ENCODE measurements at regions of chr12 and their contacts with region 1.

Region 1: DNA sequence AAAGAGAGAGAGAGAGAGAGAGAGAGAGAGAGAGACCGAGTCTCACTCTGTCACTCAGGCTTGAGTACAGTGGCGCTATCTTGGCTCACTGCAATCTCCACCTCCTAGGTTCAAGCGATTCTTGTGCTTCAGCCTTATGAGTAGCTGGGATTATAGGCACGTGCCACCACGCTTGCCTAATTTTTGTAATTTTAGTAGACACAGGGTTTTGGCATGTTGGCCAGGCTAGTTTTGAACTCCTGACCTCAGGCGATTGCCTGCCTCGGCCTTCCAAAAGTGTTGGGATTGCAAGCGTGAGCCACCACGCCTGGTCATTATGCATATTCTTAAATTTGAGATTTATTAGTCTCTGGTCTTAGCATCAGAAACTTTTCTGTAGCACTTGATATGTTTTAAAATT is 317.9 kb upstream of the ATP2B1 start:
- DNase-seq: no peak
- ATAC-seq: no peak
- H3K4me3 ChIP-seq: no peak overlapping the region
- H3K4me3 Mint-ChIP-seq: no peak overlapping the region
- H3K27ac ChIP-seq: no peak overlapping the region
- H3K27ac Mint-ChIP-seq: no peak overlapping the region
- H3K4me1 ChIP-seq: peaks cover 2 to 19% of the 10 kb centered on the region in 2 experiments
- H3K4me1 Mint-ChIP-seq: peaks cover 11 to 15% (median 15%) of the 10 kb centered on the region in 3 donors
- H3K27me3 ChIP-seq: no peaks in the 10 kb centered on the region
- H3K27me3 Mint-ChIP-seq: peaks cover 0 to 3% of the 10 kb centered on the region in 2 donors

Region 2: DNA sequence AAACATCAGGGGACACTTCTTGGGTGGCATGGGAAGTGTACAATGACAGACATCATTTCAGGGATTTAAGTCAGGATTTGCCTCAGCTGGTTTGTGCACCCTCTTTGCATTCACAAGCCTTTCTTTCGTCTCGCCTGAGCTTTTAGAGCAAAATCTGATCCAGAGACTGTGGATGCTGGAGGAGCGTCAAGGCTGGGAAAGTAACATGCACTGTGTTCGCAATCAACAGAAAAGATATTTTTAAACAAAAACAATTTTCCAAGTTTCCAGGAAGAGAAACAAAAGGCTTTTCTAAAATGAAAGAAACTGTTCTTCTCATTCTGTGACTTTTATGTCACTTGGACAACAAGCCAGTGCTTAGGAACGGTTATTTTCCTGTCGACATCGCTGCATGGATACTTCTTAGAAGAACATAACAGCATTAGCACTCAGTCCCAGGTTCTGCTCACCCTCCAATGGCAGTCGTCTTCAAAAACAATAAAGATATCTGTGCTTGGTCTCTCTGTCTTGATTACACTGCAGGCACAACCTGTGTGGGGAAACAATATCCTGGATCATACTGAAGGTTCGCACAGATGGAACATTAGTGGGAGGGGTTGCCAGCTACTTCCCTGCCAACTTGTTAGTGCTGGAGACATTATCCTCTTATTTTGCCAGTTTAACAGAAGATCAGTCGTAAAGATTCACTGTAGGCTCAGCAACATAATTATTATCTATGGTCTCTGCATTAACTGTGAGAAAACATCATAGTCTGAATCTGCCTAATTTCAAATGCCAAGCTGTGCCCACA is 85.5 kb after region 1 on chr12:
- CTCF ChIA-PET with region 1: interaction called in 1 of 2 experiments, 11 read pairs
- POLR2A ChIA-PET with region 1: no interaction called
- DNase-seq: no peak
- ATAC-seq: no peak
- H3K4me3 ChIP-seq: no peak overlapping the region
- H3K4me3 Mint-ChIP-seq: no peak overlapping the region
- H3K27ac ChIP-seq: no peak overlapping the region
- H3K27ac Mint-ChIP-seq: no peak overlapping the region
- H3K4me1 ChIP-seq: no peaks in the 10 kb centered on the region
- H3K4me1 Mint-ChIP-seq: no peaks in the 10 kb centered on the region
- H3K27me3 ChIP-seq: no peaks in the 10 kb centered on the region
- H3K27me3 Mint-ChIP-seq: no peaks in the 10 kb centered on the region